Activated naive CD8-positive, alpha-beta T cell treated with anti-CD3 and anti-CD28 coated beads, Interleukin-2, amount 10 ng/mL, durations not matched to agents 7 days and 5 days (primary cell): ENCODE measurements at regions of chr1 and their contacts with region 1.

Region 1: GRCh38 chr1:11262171-11263049 is at the start of gene MTOR:
- DNase-seq: peak; percentile 86
- ATAC-seq: peak; percentile 98
- H3K4me3 Mint-ChIP-seq: peak within 1 kb of the TSS; percentile 94
- H3K27ac Mint-ChIP-seq: peak within 1 kb of the TSS; percentile 82
- H3K4me1 Mint-ChIP-seq: peaks cover 14% of the 10 kb centered on the region
- H3K27me3 Mint-ChIP-seq: peaks cover 3% of the 10 kb centered on the region
- total RNA-seq, gene MTOR: 40.7 to 45.4 TPM

Region 2: GRCh38 chr1:11012250-11013171 is 249.9 kb before region 1 on chr1 and contains the start of gene TARDBP:
- POLR2A ChIA-PET with region 1: no interaction called
- DNase-seq: peak; percentile 93
- ATAC-seq: peak; percentile 82
- H3K4me3 Mint-ChIP-seq: peak within 1 kb of the TSS; percentile 91
- H3K27ac Mint-ChIP-seq: peak within 1 kb of the TSS; percentile 99
- H3K4me1 Mint-ChIP-seq: peaks cover 17% of the 10 kb centered on the region
- H3K27me3 Mint-ChIP-seq: no peaks in the 10 kb centered on the region
- total RNA-seq, gene TARDBP: 166 to 174 TPM

Region 3: DNA sequence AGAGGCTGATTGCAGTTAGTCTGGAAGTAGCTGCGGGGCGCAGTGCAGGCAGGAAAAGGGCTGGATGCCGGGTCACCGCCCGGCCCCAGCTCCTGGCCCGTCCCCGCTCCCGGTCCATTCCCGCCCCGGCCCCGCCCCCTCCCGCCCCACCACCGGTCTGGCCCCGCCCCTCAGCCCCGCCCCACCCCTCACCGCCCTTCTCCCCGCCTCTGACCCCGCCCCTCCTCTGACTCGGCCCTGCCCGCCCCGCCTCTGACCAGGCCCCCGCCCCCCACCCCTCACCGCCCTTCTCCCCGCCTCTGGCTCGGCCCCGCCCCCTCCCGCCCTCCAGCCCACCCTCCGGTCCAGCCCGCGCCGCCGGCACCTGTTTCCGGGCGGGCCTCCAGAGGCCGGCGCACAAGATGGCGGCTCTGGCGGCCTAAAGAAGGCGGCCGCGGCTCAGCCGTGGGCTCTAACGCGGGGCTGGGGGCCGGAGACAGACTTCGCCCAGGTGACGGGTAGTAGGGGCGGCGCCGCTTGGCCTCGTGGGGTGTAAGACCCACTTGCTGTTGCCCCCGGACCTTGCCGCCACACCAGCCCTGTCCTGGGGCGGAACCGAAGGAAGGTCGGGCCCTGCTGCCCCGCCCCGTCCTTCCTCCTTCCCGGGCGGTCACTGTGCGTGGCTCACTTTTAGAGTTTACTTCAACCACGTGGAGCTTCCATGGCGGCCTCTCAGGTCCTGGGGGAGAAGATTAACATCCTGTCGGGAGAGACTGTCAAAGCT is 10.6 kb after region 1 on chr1 and contains the start of gene UBIAD1:
- POLR2A ChIA-PET with region 1: interaction called, 32 read pairs
- DNase-seq: peak; percentile 87
- ATAC-seq: peak; percentile 89
- H3K4me3 Mint-ChIP-seq: peak within 1 kb of the TSS; percentile 97
- H3K27ac Mint-ChIP-seq: peak within 1 kb of the TSS; percentile 92
- H3K4me1 Mint-ChIP-seq: peaks cover 27% of the 10 kb centered on the region
- H3K27me3 Mint-ChIP-seq: no peaks in the 10 kb centered on the region
- total RNA-seq, gene UBIAD1: 26.5 to 28.9 TPM